ENCODE measurements at regions of chr20 and their contacts with region 1.

Region 1: GRCh38 chr20:24100385-24101011 is 111.9 kb upstream of the GGTLC1 start:
- DNase-seq: peak; percentile 70 to 78
- H3K4me3 ChIP-seq: no peak overlapping the region
- H3K27ac ChIP-seq: peak overlapping the region; percentile 25; the same call in 1 of the 2 replicates
- H3K4me1 ChIP-seq: peaks cover 98% of the 10 kb centered on the region
- H3K27me3 ChIP-seq: no peaks in the 10 kb centered on the region
- CTCF ChIP-seq: peak; percentile 80

Region 2: DNA sequence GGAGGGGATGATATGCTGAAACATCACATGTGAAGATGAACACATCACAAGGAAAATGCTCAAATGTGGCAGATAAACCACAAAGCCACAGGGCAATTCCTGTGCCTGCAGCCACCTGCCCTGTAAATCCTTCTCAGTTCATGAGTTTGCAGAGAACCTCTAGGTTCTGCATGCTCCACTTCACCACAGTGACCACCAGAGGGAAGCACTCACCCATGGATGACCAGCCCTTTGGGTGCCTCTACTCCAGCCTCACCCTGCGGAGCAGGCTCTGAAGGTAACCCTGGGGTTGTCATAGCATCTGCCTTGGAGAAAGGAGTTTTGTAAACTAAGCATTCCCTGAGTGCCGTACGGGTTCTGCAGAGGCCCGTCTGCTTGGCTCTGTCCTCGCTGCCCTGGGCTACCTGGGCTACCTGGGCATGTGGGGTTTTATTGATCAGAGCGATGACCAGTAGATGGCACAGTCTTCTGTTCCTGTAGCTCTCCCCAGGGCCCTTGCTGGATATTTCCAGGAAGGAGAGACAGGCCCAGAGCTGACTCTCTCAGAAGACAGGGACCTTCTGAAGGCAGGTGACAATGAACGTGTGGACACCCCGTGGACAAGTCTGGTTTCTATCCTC is 318.0 kb before region 1 on chr20:
- CTCF ChIA-PET with region 1: no interaction called
- POLR2A ChIA-PET with region 1: no interaction called
- intact Hi-C with region 1: loop called (anchors 5 kb)
- DNase-seq: peak; percentile 36 to 61
- H3K4me3 ChIP-seq: no peak overlapping the region
- H3K27ac ChIP-seq: no peak overlapping the region
- H3K4me1 ChIP-seq: no peaks in the 10 kb centered on the region
- H3K27me3 ChIP-seq: no peaks in the 10 kb centered on the region
- CTCF ChIP-seq: peak; percentile 73

Region 3: GRCh38 chr20:23937303-23938117 is 163.0 kb before region 1 on chr20:
- CTCF ChIA-PET with region 1: interaction called, 3 read pairs
- POLR2A ChIA-PET with region 1: no interaction called
- intact Hi-C with region 1: loop called (anchors 1 kb)
- DNase-seq: peak; percentile 60 to 75
- H3K4me3 ChIP-seq: no peak overlapping the region
- H3K27ac ChIP-seq: no peak overlapping the region
- H3K4me1 ChIP-seq: no peaks in the 10 kb centered on the region
- H3K27me3 ChIP-seq: no peaks in the 10 kb centered on the region
- CTCF ChIP-seq: peak; percentile 92

Region 4: DNA sequence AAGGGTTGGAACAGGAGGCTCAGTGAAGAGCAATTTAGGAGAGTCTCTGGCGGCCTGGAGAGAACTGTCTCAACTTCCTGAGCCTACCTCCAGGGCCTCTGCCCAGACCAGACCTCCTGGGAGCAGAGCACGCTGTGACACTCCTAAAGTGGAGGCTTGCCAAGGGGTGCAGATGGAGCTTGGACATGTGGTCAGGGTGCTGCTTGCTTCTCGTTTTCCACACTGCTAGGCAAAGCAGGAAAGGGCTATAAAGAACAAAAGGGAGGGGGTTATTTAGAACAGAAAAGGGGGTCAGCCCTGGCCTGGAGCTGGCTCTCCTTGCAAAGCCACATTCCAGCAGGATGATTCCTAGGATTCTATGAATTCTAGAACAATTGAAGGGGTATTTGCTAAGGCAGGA is 33.8 kb after region 1 on chr20:
- CTCF ChIA-PET with region 1: interaction called, 5 read pairs
- POLR2A ChIA-PET with region 1: interaction called, 4 read pairs
- intact Hi-C with region 1: loop called (anchors 1 kb)
- DNase-seq: peak; percentile 77 to 94
- H3K4me3 ChIP-seq: peak overlapping the region; percentile 2; the same call in 1 of the 2 replicates
- H3K27ac ChIP-seq: peak overlapping the region; percentile 97
- H3K4me1 ChIP-seq: peaks cover 96% of the 10 kb centered on the region
- H3K27me3 ChIP-seq: no peaks in the 10 kb centered on the region
- CTCF ChIP-seq: no peak

Region 5: DNA sequence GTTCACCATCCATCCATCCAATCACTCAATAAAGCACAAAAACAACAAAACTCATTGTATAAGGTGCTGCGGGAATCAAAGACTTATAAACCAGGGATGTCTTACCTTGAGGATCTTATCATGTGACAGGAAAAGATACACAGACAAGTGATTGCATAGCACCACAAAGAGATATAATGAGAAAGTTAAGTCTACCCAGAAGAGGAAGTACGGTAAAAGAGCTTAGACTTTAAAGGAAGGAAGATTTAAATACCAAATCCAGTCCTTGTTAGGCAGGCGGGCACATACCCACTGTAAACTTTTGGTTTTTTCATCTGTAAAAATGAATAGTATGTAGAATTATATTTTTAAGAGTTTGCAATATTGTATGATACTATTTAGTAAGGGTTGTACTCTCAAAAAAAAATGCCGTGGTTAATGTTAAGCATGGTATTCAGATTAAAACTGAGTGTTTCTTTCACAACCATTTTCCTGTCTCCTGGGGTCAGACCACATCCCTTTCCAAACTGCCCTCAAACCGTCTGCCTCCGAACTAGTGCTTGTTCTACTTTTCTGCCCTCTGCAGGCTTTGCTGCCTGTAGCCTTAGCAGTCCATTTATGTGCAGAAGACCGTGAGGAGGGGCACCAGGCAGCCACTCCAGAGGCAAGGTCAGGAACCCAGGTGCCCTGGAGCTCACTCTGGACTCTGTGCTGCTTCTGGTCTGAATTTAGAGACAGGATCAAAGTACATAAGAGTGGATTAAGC is 189.4 kb after region 1 on chr20:
- CTCF ChIA-PET with region 1: no interaction called
- POLR2A ChIA-PET with region 1: no interaction called
- intact Hi-C with region 1: no loop called
- DNase-seq: no peak
- H3K4me3 ChIP-seq: no peak overlapping the region
- H3K27ac ChIP-seq: no peak overlapping the region
- H3K4me1 ChIP-seq: no peaks in the 10 kb centered on the region
- H3K27me3 ChIP-seq: no peaks in the 10 kb centered on the region
- CTCF ChIP-seq: no peak

Region 6: GRCh38 chr20:24672886-24673677 is 572.6 kb after region 1 on chr20:
- CTCF ChIA-PET with region 1: no interaction called
- POLR2A ChIA-PET with region 1: interaction called, 4 read pairs
- intact Hi-C with region 1: loop called (anchors 5 kb)
- DNase-seq: peak; percentile 64 to 92
- H3K4me3 ChIP-seq: no peak overlapping the region
- H3K27ac ChIP-seq: peak overlapping the region; percentile 64
- H3K4me1 ChIP-seq: peaks cover 23% of the 10 kb centered on the region
- H3K27me3 ChIP-seq: no peaks in the 10 kb centered on the region
- CTCF ChIP-seq: no peak

Measured in PC-9 (cell line).